Esophagus muscularis mucosa (tissue), 4 donors: ENCODE measurements at regions of chr6 and their contacts with region 1.

Region 1: GRCh38 chr6:37018198-37019064 is 13.0 kb downstream of the FGD2 start:
- DNase-seq: peak; percentile 96
- H3K4me3 ChIP-seq: no peak overlapping the region
- H3K27ac ChIP-seq: peak overlapping the region; percentile 61 to 73 (median 69)
- H3K4me1 ChIP-seq: peaks cover 13 to 27% (median 23%) of the 10 kb centered on the region in 4 donors
- H3K27me3 ChIP-seq: no peaks in the 10 kb centered on the region
- CTCF ChIP-seq: peak; percentile 86 to 97 (median 90)
- EP300 ChIP-seq: no peak
- POLR2A ChIP-seq: no peak

Region 2: GRCh38 chr6:36765594-36766398 is 252.6 kb before region 1 on chr6:
- intact Hi-C with region 1: loop called (anchors 5 kb)
- DNase-seq: no peak
- H3K4me3 ChIP-seq: no peak overlapping the region
- H3K27ac ChIP-seq: no peak overlapping the region
- H3K4me1 ChIP-seq: peaks cover 21 to 42% (median 38%) of the 10 kb centered on the region in 4 donors
- H3K27me3 ChIP-seq: no peaks in the 10 kb centered on the region
- CTCF ChIP-seq: peak; percentile 79 to 94 (median 93)
- EP300 ChIP-seq: no peak
- POLR2A ChIP-seq: no peak

Region 3: DNA sequence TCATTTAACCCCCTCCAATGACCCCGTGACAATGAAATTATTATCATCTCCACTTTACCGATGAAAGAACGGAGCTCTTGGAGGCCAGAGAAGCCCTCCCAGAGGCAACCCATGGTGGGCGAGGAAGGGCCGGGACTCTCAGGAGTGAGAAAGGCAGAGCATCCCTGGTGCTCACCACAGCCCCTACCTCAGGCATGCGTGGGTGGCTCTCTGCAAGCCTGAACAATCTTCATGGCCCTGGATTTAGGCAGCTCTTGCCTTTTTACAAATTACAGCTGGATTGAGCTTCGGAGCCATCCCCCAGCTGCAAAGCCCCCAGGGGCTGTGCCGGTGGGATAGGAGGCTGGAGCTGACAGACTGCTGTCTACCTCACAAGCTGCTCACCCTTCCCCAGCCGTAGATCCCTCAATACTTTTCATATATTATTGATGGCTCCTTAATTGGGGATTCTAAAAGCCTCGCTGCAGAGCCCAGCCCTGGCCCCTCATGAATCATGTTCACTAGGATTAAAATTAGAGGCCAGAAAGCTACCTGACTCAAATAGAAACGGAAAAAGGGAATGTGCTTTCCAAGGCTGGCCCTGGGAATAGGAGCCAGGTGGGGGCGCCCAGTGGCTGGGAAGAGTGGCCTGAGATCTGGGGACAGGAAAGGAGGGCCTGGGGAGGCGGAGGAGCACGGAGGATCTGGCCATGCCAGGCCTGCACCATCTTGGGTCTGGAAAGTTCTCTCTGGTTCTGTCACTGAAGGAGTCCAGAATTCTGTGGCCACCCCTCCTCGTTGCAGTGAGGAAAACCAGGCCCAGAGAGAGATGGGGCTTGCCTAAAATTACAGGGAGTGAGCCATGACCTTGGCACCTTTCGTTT is 208.3 kb before region 1 on chr6:
- intact Hi-C with region 1: no loop called
- DNase-seq: no peak
- H3K4me3 ChIP-seq: no peak overlapping the region
- H3K27ac ChIP-seq: no peak overlapping the region
- H3K4me1 ChIP-seq: peaks cover 0 to 5% (median 1%) of the 10 kb centered on the region in 4 donors
- H3K27me3 ChIP-seq: peaks cover 0 to 6% (median 0%) of the 10 kb centered on the region in 4 donors
- CTCF ChIP-seq: no peak
- EP300 ChIP-seq: no peak
- POLR2A ChIP-seq: no peak

Region 4: DNA sequence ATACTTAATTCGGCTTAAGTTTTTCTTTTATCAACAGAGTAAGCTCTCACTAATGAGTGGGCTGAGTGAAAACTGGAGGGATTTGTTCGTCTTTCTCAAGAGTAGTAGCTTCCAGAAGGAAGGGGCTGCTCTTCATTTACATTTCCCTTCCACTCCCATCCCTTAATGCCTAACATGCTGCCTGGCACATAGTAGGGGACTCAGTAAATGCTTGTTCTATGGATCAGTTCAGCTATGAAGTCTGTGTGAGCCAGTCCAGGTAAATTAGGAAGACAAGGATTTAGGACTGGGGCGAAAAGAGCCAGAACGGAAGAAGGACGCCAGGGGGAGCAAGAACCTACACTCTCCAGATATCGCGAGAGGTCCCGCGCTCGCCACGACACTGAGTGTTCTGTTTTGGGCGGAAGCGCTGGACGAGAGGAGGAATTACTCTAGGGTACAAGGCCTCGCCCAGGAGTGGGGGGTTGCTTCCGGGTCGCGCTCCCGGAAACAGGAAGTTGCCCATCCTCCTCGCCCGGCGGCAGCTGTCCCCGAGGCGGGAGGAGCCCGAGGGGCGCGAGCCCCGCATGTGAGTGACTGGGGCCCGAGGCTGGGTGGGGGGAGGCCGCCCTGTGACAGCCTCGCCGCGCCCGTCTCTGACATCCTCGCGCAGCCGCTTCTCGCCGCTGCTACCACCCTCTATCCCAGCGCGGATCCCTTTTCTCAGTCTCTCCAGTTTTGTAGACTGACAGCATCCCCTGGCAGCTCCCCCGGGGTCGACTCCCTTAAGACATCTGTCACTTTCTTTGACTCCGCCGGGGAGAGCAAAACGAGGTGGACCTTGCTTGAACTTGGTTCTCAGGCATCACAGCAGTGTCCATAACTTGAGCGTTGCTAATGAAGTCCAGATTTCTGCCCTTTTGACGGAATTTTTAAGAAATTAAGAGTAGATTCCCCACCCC is 132.7 kb before region 1 on chr6 and contains the start of gene C6orf89:
- intact Hi-C with region 1: loop called (anchors 5 kb)
- DNase-seq: peak; percentile 99
- H3K4me3 ChIP-seq: peak within 1 kb of the TSS; percentile 71 to 88 (median 82)
- H3K27ac ChIP-seq: peak within 1 kb of the TSS; percentile 86 to 89 (median 88)
- H3K4me1 ChIP-seq: peaks cover 18 to 40% (median 36%) of the 10 kb centered on the region in 4 donors
- H3K27me3 ChIP-seq: no peaks in the 10 kb centered on the region
- CTCF ChIP-seq: peak; percentile 88 to 97 (median 90)
- EP300 ChIP-seq: no peak
- POLR2A ChIP-seq: peak; percentile 78
- total RNA-seq, gene C6orf89: 56.5 to 66.2 (median 59.0) TPM

Region 5: DNA sequence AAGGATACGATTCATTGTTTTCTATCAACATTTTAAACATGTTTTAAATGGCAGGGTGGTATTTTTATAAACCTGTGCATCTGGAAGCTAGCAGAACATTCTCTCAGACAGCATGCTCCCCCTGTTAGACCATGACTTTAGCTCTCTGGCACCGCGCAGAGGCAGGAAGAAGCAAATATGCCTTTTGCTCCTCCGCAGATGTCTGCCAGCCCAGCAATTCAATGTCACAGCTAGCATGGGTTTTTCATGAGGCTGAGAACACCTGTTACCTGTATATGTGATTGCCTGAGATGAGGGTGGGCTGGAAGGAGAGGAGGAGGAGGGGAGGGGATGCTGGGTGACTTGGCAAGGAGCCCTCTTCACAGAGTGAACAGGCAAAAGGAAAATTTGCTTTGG is 39.1 kb before region 1 on chr6:
- intact Hi-C with region 1: loop called (anchors 5 kb)
- DNase-seq: no peak
- H3K4me3 ChIP-seq: no peak overlapping the region
- H3K27ac ChIP-seq: peak overlapping the region in 3 of 4 donors; percentile 1 to 54 (median 25)
- H3K4me1 ChIP-seq: peaks cover 58 to 94% (median 63%) of the 10 kb centered on the region in 4 donors
- H3K27me3 ChIP-seq: no peaks in the 10 kb centered on the region
- CTCF ChIP-seq: peak; percentile 53 to 68 (median 63)
- EP300 ChIP-seq: no peak
- POLR2A ChIP-seq: no peak

Region 6: GRCh38 chr6:37819177-37819823 is 800.9 kb after region 1 on chr6 and contains the start of gene ZFAND3:
- intact Hi-C with region 1: no loop called
- DNase-seq: peak; percentile 98
- H3K4me3 ChIP-seq: peak within 1 kb of the TSS; percentile 94 to 98 (median 96)
- H3K27ac ChIP-seq: peak within 1 kb of the TSS; percentile 94 to 99 (median 97)
- H3K4me1 ChIP-seq: peaks cover 38 to 50% (median 46%) of the 10 kb centered on the region in 4 donors
- H3K27me3 ChIP-seq: no peaks in the 10 kb centered on the region
- CTCF ChIP-seq: no peak
- EP300 ChIP-seq: no peak
- POLR2A ChIP-seq: no peak
- total RNA-seq, gene ZFAND3: 37.3 to 70.1 (median 55.2) TPM